Endothelial cell of umbilical vein (primary cell): ENCODE measurements at regions of chr11 and their contacts with region 1.

Region 1: DNA sequence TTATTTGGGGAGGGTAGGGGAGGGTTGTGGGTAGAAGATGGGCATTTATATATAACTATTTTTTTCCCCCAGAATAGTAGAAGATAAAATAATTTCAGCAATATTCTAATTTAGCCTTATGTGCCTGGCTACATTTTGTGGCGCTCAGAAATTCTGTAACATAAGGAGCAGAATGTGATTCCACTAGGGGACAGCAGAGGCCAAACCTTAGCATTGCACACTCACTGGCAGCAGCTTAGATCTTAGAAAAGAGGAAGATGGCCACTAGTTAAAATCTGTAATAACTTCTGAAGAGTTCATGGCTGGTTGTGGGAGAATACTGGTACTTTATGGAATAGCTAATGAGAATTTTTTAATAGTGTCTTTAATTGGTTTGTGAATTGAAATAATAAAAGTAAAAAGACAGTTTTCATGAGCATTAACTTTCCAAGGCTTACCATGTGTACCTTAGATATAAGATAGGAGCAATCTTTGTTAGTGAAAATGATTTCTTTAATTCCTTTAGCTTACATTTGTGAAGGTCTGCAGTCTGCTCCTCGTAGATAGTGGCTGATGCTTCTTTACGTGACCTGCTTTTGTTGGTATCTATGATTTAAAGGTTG is 33.1 kb downstream of the DDX10 start:
- DNase-seq: peak; percentile 78
- H3K4me3 ChIP-seq: no peak overlapping the region
- H3K27ac ChIP-seq: no peak overlapping the region
- H3K4me1 ChIP-seq: no peaks in the 10 kb centered on the region
- H3K27me3 ChIP-seq: no peaks in the 10 kb centered on the region
- CTCF ChIP-seq: peak; percentile 78 to 79
- POLR2A ChIP-seq: no peak

Region 2: DNA sequence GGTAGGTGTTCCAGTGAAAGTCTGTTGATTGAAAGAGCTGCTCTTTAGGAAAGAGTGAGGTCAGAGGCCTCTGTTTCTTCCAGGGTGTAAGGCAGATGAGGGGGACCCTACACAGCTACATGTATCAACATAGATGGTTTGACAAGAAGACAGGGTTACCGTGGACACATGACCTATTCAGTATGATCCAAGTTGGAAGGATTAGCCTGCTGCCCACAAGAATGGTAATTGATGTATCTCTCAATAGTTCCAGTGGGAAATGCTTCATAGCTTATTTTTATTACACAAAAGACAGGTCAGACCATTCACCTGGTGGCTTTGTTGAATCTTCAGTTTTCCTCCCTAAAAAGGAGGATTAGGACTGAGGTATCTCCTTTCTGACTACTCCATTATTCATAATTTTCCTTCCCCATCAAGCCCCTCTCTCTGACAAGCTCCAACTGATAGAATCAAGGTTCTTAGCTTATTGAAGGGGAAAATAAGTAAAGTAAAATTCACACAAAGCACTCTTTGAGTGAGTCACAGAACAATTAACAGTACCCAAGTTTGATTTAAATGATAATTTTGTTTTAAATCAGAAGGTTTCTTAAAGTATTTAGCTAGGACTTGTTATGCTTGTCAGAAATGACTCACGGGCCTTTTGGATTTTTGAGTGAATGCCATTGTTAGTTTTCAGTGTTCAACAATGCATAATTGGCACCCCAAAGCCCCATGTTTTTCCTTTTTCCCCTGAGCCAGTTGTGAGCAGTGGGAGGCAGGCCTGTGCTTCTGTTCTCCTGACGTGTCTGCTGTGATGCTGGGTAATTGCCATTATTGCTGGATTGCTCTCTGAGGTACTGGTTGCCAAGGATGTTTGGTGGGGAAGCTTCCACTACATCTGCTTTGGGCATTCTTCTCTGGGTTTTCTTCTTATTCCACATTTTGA is 340.1 kb after region 1 on chr11:
- CTCF ChIA-PET with region 1: interaction called, 4 read pairs
- POLR2A ChIA-PET with region 1: no interaction called
- dilution Hi-C with region 1: no loop called
- intact Hi-C with region 1: loop called (anchors 5 kb)
- DNase-seq: peak; percentile 85
- H3K4me3 ChIP-seq: no peak overlapping the region
- H3K27ac ChIP-seq: peak overlapping the region; percentile 21
- H3K4me1 ChIP-seq: peaks cover 44% of the 10 kb centered on the region
- H3K27me3 ChIP-seq: no peaks in the 10 kb centered on the region
- CTCF ChIP-seq: no peak
- POLR2A ChIP-seq: no peak

Region 3: DNA sequence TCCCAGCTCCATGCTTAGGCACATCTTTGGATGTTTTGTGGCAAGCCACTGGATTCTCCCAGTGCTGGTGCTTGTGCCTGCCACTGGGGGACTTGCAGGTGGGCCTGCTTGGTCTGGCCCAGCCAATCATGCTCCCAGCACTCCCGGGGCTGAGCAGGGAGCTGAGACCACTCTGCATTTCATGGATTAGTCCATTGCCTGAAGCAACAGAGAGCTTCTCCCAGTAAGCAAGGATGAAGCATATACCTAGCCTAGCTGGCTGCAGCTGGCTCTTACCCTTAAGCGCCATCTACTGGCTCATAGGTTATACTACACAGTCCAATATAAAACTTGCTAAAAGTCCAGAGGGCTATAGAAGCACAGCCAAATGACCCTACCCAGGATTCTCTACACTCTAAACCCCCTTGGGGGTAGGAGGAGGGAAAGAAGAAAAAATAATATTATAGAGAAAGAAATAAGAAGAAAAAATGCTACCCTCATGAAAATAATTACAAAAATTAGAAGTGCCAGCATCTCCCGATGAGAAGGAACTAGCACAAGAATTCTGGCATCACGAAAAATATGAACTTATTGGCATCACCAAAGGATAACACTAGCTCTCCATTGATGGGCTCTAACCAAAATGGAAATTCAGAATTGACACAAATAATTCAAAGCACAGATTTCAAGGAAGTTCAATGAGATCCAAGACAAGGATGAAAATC is 999.3 kb after region 1 on chr11:
- CTCF ChIA-PET with region 1: interaction called, 86 read pairs
- POLR2A ChIA-PET with region 1: no interaction called
- dilution Hi-C with region 1: no loop called
- intact Hi-C with region 1: loop called (anchors 1 kb)
- DNase-seq: peak; percentile 44
- H3K4me3 ChIP-seq: no peak overlapping the region
- H3K27ac ChIP-seq: no peak overlapping the region
- H3K4me1 ChIP-seq: no peaks in the 10 kb centered on the region
- H3K27me3 ChIP-seq: no peaks in the 10 kb centered on the region
- CTCF ChIP-seq: peak; percentile 59 to 68
- POLR2A ChIP-seq: no peak